ENCODE measurements at regions of chr12 and their contacts with region 1.

Region 1: DNA sequence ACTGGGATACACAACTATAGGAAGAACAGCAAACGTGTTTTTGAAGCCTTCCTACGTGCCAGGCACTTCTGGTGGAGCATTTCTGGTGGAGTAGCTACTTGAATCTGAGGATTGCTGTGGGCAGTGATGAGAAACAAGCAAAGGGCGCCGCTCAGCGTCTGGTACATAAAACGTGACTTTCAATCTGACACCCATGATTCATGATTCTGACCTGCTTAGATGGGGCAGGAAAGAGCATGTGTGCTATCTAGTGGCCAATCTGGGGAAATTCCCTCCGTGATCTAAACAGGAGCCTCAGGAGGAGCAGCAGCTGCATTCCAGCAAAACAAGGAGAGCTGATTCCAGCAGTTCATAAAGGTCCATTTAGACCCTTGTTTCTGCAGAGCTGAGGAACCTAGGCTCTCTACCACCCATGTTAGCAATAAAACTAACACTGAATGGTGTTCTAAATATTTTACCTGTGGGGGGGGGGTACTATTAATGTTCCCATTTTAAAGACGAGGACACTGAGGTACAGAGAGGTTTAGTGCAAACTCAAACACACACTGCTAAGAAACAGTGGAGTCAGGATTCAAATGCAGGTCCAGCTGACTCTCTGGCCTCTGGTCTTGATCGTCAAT is 37.8 kb downstream of the PAH start:
- DNase-seq: peak; percentile 75 to 91
- ATAC-seq: peak; percentile 89 to 95
- H3K4me3 ChIP-seq: no peak overlapping the region
- H3K27ac ChIP-seq: 0 out of 6 replicates have a peak overlapping the region, but pooled peaks of 1 of the 2 experiments have one; percentile 13
- H3K4me1 ChIP-seq: no peaks in the 10 kb centered on the region
- CTCF ChIP-seq: peak; percentile 90
- EP300 ChIP-seq: no peak
- POLR2A ChIP-seq: no peak
- RAD21 ChIP-seq: peak; percentile 85 to 90

Region 2: GRCh38 chr12:102866236-102866635 is 13.0 kb before region 1 on chr12:
- CTCF ChIA-PET with region 1: interaction called, 13 read pairs
- POLR2A ChIA-PET with region 1: no interaction called
- DNase-seq: no peak
- ATAC-seq: no peak
- H3K4me3 ChIP-seq: no peak overlapping the region
- H3K27ac ChIP-seq: no peak overlapping the region
- H3K4me1 ChIP-seq: no peaks in the 10 kb centered on the region
- CTCF ChIP-seq: no peak
- EP300 ChIP-seq: no peak
- POLR2A ChIP-seq: no peak
- RAD21 ChIP-seq: no peak

Region 3: DNA sequence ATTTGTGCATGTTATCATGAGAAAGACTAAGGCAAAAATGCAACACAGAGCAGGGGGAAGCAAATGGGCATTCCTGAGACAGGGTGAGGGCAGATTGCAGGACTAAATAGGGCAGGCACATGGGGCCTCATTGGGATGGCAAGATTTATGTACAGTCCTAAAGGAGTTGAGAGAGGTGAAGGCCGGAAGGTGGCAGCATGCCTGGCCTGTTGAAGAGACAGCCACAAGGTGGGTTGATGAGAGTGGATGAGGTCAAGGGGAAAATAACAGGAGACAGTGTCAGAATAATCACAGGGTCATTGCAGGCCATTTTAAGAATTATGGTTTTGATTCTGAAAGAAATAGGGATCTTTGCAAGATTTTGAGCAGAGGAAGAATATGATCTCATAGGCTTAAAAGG is 16.8 kb after region 1 on chr12:
- CTCF ChIA-PET with region 1: interaction called, 18 read pairs
- POLR2A ChIA-PET with region 1: no interaction called
- DNase-seq: no peak
- ATAC-seq: no peak
- H3K4me3 ChIP-seq: no peak overlapping the region
- H3K27ac ChIP-seq: no peak overlapping the region
- H3K4me1 ChIP-seq: peaks cover 17% of the 10 kb centered on the region; the same call in 2 of the 3 replicates
- CTCF ChIP-seq: no peak
- EP300 ChIP-seq: no peak
- POLR2A ChIP-seq: no peak
- RAD21 ChIP-seq: no peak

Region 4: GRCh38 chr12:102903337-102904007 is 24.2 kb after region 1 on chr12:
- CTCF ChIA-PET with region 1: interaction called, 14 read pairs
- POLR2A ChIA-PET with region 1: no interaction called
- DNase-seq: peak in 1 of 2 experiments; percentile 65
- ATAC-seq: peak; percentile 52 to 56; a peak in 4 of 6 replicates
- H3K4me3 ChIP-seq: no peak overlapping the region
- H3K27ac ChIP-seq: no peak overlapping the region
- H3K4me1 ChIP-seq: peaks cover 9% of the 10 kb centered on the region; the same call in 2 of the 3 replicates
- CTCF ChIP-seq: no peak
- EP300 ChIP-seq: no peak
- POLR2A ChIP-seq: no peak
- RAD21 ChIP-seq: no peak

Region 5: DNA sequence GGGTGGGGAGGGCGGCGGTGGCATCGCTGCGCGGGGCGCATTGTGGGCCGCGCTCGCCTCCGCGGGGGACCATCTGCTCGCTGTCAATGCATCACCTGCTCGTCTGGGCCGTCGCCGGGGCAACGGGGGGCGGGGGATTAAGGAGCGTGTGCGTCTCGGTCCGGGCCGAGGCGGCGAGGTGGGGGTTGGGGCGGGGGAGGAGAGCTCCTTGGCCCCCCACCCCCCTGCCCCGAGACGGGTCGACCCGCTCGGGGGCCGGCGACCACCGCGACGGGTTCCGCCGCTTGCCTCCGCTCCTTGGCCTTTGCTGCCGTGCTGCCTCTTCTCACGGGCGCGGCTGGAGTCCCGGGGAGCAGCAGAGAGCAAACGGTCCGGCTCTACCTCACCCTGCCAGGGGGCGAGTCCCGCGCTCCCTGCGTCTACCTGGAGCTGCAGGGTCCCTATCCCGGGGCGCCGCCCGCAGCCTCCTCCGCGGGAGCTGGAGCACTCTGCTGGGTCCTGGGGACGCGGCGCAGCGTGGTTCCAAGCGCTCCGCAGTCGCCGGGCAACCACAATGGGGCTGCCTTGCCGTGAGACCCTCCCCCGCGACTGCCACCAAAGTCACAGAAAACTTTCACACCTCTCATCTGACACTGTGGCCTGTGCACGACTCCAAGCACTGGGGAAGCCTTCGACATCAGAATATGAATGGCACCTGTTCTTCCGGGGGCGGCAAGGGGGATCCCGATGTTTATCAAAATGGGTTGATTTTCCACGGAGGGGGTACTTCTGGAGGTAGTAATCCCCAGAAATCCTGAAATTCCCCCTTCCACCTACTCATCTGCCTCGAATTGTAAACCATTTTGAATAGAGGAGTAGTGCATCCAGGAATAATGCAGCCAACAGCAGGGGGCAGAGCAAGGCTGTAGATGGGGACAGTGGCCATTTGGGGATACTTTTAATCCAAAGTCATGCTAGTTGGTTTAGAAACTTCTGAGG is 616.5 kb after region 1 on chr12 and contains the start of gene C12orf42:
- CTCF ChIA-PET with region 1: interaction called, 10 read pairs
- POLR2A ChIA-PET with region 1: no interaction called
- DNase-seq: peak; percentile 75 to 80
- ATAC-seq: peak; percentile 91 to 95
- H3K4me3 ChIP-seq: peak within 1 kb of the TSS; percentile 54
- H3K27ac ChIP-seq: peak within 1 kb of the TSS; percentile 26 to 72; a peak in 4 of 6 replicates
- H3K4me1 ChIP-seq: peaks cover 14% of the 10 kb centered on the region; the same call in 2 of the 3 replicates
- CTCF ChIP-seq: peak; percentile 86
- EP300 ChIP-seq: no peak
- POLR2A ChIP-seq: no peak
- RAD21 ChIP-seq: peak; percentile 85 to 92
- polyA plus RNA-seq, gene C12orf42: not detected in 2 replicates

Measured in A549 (cell line).